Heart left ventricle (tissue), 16 donors: ENCODE measurements at regions of chr7 and their contacts with region 1.

Region 1: DNA sequence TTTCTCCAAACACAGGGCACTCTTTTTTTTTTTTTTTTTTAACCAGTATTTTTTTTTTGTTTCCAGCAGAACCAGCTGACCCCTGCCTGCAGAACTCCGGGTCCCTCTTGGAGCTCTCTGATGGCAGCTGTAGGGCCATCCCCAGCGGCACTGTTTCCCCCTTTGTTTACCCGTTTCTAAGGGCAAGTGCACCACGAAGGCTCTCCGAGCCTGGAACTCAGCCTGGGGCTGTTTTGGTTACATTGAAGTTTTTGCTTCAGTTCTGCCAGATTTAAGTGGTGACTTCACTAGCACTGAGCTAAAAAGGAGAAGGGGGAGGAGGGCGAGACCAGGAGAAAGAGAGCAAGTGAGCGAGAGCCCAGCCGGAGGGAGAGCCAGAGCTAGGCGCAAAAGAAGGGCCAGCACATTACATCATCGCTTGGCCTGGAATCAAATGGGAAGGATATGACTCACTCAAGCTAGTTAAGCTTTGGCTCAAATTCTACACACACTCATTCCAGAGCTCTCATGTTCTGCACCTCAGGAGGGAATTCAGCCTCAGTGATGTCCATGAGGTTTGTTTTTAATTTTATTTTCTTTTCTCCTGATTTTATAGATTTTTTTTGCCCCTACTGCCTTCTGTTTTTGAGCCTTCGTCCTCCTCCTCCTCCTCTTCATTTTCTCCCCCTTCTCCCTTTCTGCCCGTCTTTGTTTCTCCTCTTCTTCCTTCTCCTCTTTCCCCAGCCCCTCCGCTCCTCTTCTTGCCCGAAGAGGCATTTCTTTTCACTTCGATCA is 272.3 kb downstream of the TRIL start:
- DNase-seq: peak; percentile 87 to 97 (median 95)
- ATAC-seq: peak; percentile 90 to 96 (median 94)
- H3K4me3 ChIP-seq: peak overlapping the region; percentile 9 to 65 (median 58)
- H3K27ac ChIP-seq: peak overlapping the region; percentile 59 to 96 (median 88)
- H3K4me1 ChIP-seq: peaks cover 7 to 55% (median 34%) of the 10 kb centered on the region in 12 donors
- H3K27me3 ChIP-seq: no peaks in the 10 kb centered on the region
- CTCF ChIP-seq: no peak
- POLR2A ChIP-seq: peak in 1 of 2 donors; percentile 71

Region 2: GRCh38 chr7:28389504-28390395 is 296.1 kb before region 1 on chr7:
- intact Hi-C with region 1: loop called in 1 of 10 experiments (anchors 10 kb)
- DNase-seq: no peak
- ATAC-seq: peak in 2 of 4 donors; percentile 38 to 44
- H3K4me3 ChIP-seq: peak overlapping the region in 11 of 12 donors; percentile 8 to 52 (median 43)
- H3K27ac ChIP-seq: peak overlapping the region in 4 of 12 donors; percentile 1 to 53 (median 38)
- H3K4me1 ChIP-seq: peaks cover 0 to 5% (median 0%) of the 10 kb centered on the region in 12 donors
- H3K27me3 ChIP-seq: peaks cover 0 to 3% (median 0%) of the 10 kb centered on the region in 9 donors
- CTCF ChIP-seq: peak; percentile 73 to 92 (median 84)
- POLR2A ChIP-seq: no peak

Region 3: GRCh38 chr7:28408960-28409715 is 276.7 kb before region 1 on chr7:
- intact Hi-C with region 1: loop called in 7 of 10 experiments (anchors 5 to 10 kb)
- DNase-seq: peak; percentile 95 to 97 (median 97)
- ATAC-seq: peak; percentile 80 to 90 (median 84)
- H3K4me3 ChIP-seq: peak overlapping the region; percentile 70 to 90 (median 84)
- H3K27ac ChIP-seq: peak overlapping the region; percentile 53 to 98 (median 90)
- H3K4me1 ChIP-seq: peaks cover 0 to 57% (median 25%) of the 10 kb centered on the region in 12 donors
- H3K27me3 ChIP-seq: peaks cover 0 to 28% (median 0%) of the 10 kb centered on the region in 9 donors
- CTCF ChIP-seq: no peak
- POLR2A ChIP-seq: peak; percentile 41 to 84

Region 4: DNA sequence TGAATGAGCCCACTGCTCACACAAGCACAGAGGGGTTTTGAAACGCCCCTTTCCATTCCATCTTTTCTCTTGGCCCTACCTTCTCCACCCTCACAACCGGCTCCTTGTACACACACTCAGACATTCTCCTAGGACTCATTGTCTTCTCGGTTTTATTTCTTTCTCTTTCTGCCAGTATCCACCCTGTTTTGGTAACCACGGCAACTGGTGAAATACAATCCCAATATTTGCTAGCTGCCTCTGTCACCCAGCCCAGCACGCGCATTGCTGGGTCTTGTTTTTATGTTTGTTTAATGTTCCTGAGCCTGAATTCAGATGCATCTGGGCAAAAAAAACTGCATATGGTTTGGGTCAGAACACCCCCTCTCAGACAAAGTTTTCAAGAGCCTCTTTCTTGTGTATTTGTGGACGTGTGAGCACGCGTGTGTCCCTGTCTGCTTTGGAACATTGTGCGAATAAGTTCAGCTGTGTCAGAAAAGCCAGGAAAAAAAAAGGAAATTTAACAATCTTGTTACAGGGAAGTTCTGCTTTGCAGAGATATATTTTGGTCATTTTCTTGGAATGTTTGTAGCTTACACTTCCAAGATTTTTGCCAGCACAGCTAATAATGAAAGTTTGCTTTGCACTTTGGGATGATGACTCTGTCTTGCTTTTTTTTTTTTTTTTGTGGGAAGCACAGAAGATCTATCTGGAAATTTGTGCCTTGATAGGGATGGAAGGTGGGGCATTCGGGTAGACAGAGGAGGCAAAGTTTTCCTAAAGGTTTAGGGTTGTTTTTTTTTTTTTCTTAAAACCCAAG is 46.4 kb after region 1 on chr7:
- intact Hi-C with region 1: loop called in 1 of 10 experiments (anchors 5 kb)
- DNase-seq: peak in 2 of 5 donors; percentile 30 to 42
- ATAC-seq: peak; percentile 32 to 76 (median 59)
- H3K4me3 ChIP-seq: peak overlapping the region in 7 of 12 donors; percentile 19 to 44 (median 23)
- H3K27ac ChIP-seq: peak overlapping the region in 10 of 12 donors; percentile 6 to 57 (median 38)
- H3K4me1 ChIP-seq: peaks cover 0 to 22% (median 4%) of the 10 kb centered on the region in 12 donors
- H3K27me3 ChIP-seq: no peaks in the 10 kb centered on the region
- CTCF ChIP-seq: no peak
- POLR2A ChIP-seq: no peak